HCT116 (cell line): ENCODE measurements at regions of chr2 and their contacts with region 1.

Region 1: GRCh38 chr2:118046634-118047210 is 32.9 kb upstream of the CCDC93 start:
- DNase-seq: peak; percentile 26
- ATAC-seq: peak; percentile 69
- H3K4me3 ChIP-seq: no peak overlapping the region
- H3K27ac ChIP-seq: no peak overlapping the region
- H3K4me1 ChIP-seq: peaks cover 0 to 24% of the 10 kb centered on the region in 2 experiments; a peak in 2 of 4 replicates
- H3K27me3 ChIP-seq: no peaks in the 10 kb centered on the region
- CTCF ChIP-seq: peak; percentile 56 to 76 (median 73)
- POLR2A ChIP-seq: no peak
- RAD21 ChIP-seq: peak; percentile 88

Region 2: GRCh38 chr2:118186110-118186857 is 139.6 kb after region 1 on chr2:
- CTCF ChIA-PET with region 1: interaction called, 11 read pairs
- POLR2A ChIA-PET with region 1: no interaction called
- RAD21 ChIA-PET with region 1: no interaction called
- intact Hi-C with region 1: no loop called
- DNase-seq: peak; percentile 63
- ATAC-seq: peak; percentile 88
- H3K4me3 ChIP-seq: peak overlapping the region; percentile 61 to 65
- H3K27ac ChIP-seq: peak overlapping the region; percentile 66
- H3K4me1 ChIP-seq: peaks cover 14 to 29% of the 10 kb centered on the region in 2 experiments; a peak in 3 of 4 replicates
- H3K27me3 ChIP-seq: no peaks in the 10 kb centered on the region
- CTCF ChIP-seq: peak in 1 of 3 experiments; percentile 14; a peak in 1 of 6 replicates
- POLR2A ChIP-seq: no peak
- RAD21 ChIP-seq: no peak

Region 3: GRCh38 chr2:118221666-118222594 is 175.2 kb after region 1 on chr2:
- CTCF ChIA-PET with region 1: interaction called, 14 read pairs
- POLR2A ChIA-PET with region 1: no interaction called
- RAD21 ChIA-PET with region 1: interaction called in 1 of 2 experiments, 6 read pairs
- intact Hi-C with region 1: loop called (anchors 5 kb)
- DNase-seq: peak; percentile 53
- ATAC-seq: peak; percentile 97
- H3K4me3 ChIP-seq: no peak overlapping the region
- H3K27ac ChIP-seq: no peak overlapping the region
- H3K4me1 ChIP-seq: no peaks in the 10 kb centered on the region
- H3K27me3 ChIP-seq: no peaks in the 10 kb centered on the region
- CTCF ChIP-seq: peak; percentile 64 to 84 (median 67)
- POLR2A ChIP-seq: no peak
- RAD21 ChIP-seq: peak; percentile 87

Region 4: GRCh38 chr2:118654945-118655344 is 608.2 kb after region 1 on chr2:
- CTCF ChIA-PET with region 1: no interaction called
- POLR2A ChIA-PET with region 1: no interaction called
- RAD21 ChIA-PET with region 1: no interaction called
- intact Hi-C with region 1: loop called (anchors 10 kb)
- DNase-seq: no peak
- ATAC-seq: no peak
- H3K4me3 ChIP-seq: no peak overlapping the region
- H3K27ac ChIP-seq: no peak overlapping the region
- H3K4me1 ChIP-seq: no peaks in the 10 kb centered on the region
- H3K27me3 ChIP-seq: peaks cover 4% of the 10 kb centered on the region; the same call in 1 of the 2 replicates
- CTCF ChIP-seq: no peak
- POLR2A ChIP-seq: no peak
- RAD21 ChIP-seq: no peak

Region 5: GRCh38 chr2:118865106-118865505 is 818.4 kb after region 1 on chr2:
- CTCF ChIA-PET with region 1: interaction called, 12 read pairs
- POLR2A ChIA-PET with region 1: no interaction called
- RAD21 ChIA-PET with region 1: no interaction called
- intact Hi-C with region 1: loop called (anchors 2 kb)
- DNase-seq: peak; percentile 45
- ATAC-seq: peak; percentile 100
- H3K4me3 ChIP-seq: no peak overlapping the region
- H3K27ac ChIP-seq: no peak overlapping the region
- H3K4me1 ChIP-seq: no peaks in the 10 kb centered on the region
- H3K27me3 ChIP-seq: no peaks in the 10 kb centered on the region
- CTCF ChIP-seq: peak; percentile 61 to 73 (median 68); a peak in 5 of 6 replicates
- POLR2A ChIP-seq: no peak
- RAD21 ChIP-seq: peak; percentile 77